ENCODE measurements at regions of chr14 and their contacts with region 1.

Region 1: DNA sequence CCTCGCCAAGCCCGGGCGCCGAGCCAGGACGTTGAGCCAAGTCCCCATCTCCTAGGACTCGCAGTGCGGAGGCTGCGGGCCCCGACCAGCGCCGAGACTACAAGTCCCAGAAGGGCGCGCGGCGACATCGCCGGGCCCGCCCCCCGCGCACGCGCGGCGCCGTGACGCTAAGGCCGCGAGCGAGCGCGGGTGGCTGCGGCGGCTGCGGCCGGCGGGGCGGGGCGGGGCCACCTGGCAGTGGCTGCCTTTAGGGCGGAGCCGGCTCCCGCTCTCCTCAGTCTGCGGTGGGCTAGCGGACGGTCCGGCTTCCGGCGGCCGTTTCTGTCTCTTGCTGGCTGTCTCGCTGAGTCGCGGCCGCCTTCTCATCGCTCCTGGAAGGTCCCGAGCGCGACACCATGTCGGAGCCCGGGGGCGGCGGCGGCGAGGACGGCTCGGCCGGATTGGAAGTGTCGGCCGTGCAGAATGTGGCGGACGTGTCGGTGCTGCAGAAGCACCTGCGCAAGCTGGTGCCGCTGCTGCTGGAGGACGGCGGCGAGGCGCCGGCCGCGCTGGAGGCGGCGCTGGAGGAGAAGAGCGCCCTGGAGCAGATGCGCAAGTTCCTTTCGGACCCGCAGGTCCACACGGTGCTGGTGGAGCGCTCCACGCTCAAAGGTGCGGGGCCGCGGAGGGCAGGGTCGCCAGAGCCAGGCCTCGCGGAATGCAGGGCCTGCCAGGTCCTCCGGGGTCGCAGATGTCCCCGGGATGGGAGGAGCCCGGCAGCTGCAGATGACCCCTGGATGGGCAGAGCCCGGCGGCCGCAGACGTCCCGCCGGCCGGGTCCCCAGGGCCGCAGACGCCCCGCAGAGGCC is at the start of gene DYNC1H1:
- DNase-seq: peak; percentile 92
- ATAC-seq: peak; percentile 87
- H3K4me3 Mint-ChIP-seq: peak within 1 kb of the TSS; percentile 92
- H3K27ac Mint-ChIP-seq: peak within 1 kb of the TSS; percentile 93
- H3K4me1 Mint-ChIP-seq: peaks cover 43% of the 10 kb centered on the region
- H3K27me3 Mint-ChIP-seq: no peaks in the 10 kb centered on the region
- CTCF ChIP-seq: no peak
- total RNA-seq, gene DYNC1H1: 208 and 236 TPM in 2 replicates

Region 2: DNA sequence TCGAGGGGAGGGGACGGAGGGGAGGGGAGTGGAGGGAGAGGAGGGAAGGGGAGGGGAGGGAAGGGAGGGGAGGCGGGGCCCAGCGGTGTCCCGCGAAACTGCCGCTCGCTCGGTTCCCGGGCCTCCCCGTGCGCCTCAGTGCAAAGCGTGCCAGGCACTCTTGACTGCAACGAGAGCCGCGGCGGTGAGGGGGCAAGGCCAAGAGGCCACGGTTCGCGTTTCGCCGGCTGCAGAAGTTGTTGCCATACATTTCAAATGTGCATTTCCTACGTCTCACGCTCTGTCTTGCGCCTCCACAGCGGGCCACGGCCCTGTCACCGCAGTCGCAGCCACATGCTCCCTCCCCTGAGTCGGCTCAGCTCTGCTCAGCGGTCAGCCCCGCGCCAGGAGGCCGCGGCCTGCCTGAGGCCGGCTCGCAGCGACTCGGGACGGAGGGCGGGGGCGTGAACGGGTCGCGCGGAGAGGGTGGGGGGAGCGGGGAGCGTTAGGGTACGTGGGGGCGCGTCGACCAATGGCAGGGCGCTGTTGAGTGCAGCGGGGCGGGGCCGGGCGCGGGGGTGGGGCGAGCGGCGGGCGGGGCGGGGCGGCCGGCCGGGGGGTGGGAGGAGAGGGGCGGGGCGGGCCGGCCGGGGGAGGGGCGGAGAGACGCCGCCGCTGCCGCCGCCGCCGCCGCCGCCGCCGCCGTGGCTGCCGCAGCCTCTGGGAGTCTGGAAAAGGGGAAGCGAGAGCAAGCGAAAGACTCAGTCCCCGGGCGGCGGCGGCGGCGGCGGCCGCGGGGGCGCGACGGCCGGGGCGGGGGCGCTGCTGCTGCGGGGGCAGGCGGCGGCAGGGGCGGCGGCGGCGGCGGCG is 203.3 kb before region 1 on chr14 and contains the start of gene PPP2R5C:
- CTCF ChIA-PET with region 1: no interaction called
- POLR2A ChIA-PET with region 1: interaction called, 3 read pairs
- intact Hi-C with region 1: loop called (anchors 1 kb)
- DNase-seq: peak; percentile 81
- ATAC-seq: peak; percentile 63
- H3K4me3 Mint-ChIP-seq: peak within 1 kb of the TSS; percentile 88
- H3K27ac Mint-ChIP-seq: peak within 1 kb of the TSS; percentile 77
- H3K4me1 Mint-ChIP-seq: peaks cover 18% of the 10 kb centered on the region
- H3K27me3 Mint-ChIP-seq: no peaks in the 10 kb centered on the region
- CTCF ChIP-seq: no peak
- total RNA-seq, gene PPP2R5C: 197 and 227 TPM in 2 replicates

Region 3: GRCh38 chr14:101947906-101948665 is 16.4 kb before region 1 on chr14:
- CTCF ChIA-PET with region 1: interaction called, 5 read pairs
- POLR2A ChIA-PET with region 1: interaction called, 15 read pairs
- intact Hi-C with region 1: loop called (anchors 1 kb)
- DNase-seq: peak; percentile 98
- ATAC-seq: peak; percentile 95
- H3K4me3 Mint-ChIP-seq: peak overlapping the region; percentile 93
- H3K27ac Mint-ChIP-seq: peak overlapping the region; percentile 97
- H3K4me1 Mint-ChIP-seq: peaks cover 19% of the 10 kb centered on the region
- H3K27me3 Mint-ChIP-seq: peaks cover 22% of the 10 kb centered on the region
- CTCF ChIP-seq: no peak

Region 4: DNA sequence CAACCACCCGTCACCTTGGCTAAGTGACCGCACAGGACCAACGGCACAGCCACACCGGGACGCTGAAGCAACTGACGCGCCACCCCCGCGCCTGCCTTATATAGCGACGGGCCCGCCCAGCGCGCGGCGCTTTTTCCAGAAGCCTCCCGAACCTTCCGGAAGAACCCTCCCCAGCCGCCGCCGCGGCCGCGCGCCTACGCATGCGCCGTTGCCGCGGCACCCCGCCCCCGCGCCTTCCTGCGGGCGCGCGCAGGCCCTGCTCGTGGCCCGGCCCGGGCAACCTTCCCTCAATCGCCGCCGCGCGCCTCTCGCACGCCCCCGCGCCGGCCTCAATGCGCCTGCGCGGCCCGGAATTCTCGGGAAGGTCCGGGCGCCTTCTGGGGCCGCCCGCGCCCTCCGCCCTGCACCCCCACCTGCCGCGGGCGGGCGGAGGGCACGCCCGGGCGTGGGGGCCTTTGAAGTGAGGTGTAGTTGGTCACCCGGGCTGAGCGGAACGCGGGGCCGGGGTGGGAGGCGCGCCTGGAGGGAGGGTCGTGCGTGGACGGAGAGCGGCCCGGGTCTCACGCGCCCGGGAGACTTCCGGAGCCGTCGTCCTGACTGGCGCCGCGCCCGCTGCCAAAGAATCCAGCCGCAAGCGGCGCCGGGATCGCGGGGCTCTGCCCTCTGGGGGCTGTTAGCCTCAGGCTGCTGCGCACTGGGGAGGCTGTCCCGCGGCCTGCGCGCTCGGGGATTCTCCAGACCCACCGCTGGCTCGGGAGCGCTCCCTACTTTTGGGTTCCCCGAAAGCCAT is 122.6 kb after region 1 on chr14 and contains the start of gene HSP90AA1:
- CTCF ChIA-PET with region 1: no interaction called
- POLR2A ChIA-PET with region 1: interaction called, 8 read pairs
- intact Hi-C with region 1: loop called (anchors 1 kb)
- DNase-seq: peak; percentile 95
- ATAC-seq: peak; percentile 69
- H3K4me3 Mint-ChIP-seq: peak within 1 kb of the TSS; percentile 93
- H3K27ac Mint-ChIP-seq: peak within 1 kb of the TSS; percentile 88
- H3K4me1 Mint-ChIP-seq: peaks cover 60% of the 10 kb centered on the region
- H3K27me3 Mint-ChIP-seq: no peaks in the 10 kb centered on the region
- CTCF ChIP-seq: no peak
- total RNA-seq, gene HSP90AA1: 431 and 435 TPM in 2 replicates

Region 5: DNA sequence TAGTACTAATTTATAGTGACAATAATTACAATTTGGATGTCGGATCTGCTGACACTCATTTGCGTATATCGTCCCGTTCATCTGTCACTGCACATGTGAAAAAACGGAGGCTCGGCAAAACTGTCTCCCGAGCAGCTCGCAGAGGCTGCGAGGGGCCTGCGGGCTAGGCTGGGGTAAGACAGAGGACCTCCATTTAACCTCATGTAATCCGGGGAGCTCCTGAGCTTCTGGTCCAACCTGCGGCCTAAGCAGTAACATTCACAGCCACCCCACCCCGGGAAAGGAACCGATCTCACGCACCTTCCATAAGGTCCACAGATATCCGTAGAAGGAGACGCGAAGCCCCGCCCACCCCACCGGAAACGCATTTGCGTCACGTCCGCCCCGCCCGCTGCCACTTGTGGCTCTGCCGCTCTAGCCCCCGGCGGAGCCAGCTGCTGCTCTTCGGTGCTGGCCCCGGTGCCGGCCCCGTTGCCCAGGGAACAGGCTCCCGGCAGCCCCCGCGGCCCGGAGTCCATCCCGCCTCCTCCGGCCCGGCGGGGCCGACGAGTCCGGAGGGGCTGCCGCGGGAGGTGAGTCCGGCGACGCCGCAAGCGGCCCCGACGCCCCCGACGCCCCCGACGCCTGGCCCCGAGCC is 398.1 kb after region 1 on chr14 and contains the starts of genes CINP and TECPR2:
- CTCF ChIA-PET with region 1: no interaction called
- POLR2A ChIA-PET with region 1: no interaction called
- intact Hi-C with region 1: loop called (anchors 1 kb)
- DNase-seq: peak; percentile 92
- ATAC-seq: peak; percentile 82
- H3K4me3 Mint-ChIP-seq: no peak within 1 kb of the TSS
- H3K27ac Mint-ChIP-seq: peak within 1 kb of the TSS; percentile 97
- H3K4me1 Mint-ChIP-seq: peaks cover 35% of the 10 kb centered on the region
- H3K27me3 Mint-ChIP-seq: no peaks in the 10 kb centered on the region
- CTCF ChIP-seq: no peak
- total RNA-seq, gene CINP: 48.6 and 57.5 TPM in 2 replicates
- total RNA-seq, gene TECPR2: 9.9 and 11.8 TPM in 2 replicates

Region 6: DNA sequence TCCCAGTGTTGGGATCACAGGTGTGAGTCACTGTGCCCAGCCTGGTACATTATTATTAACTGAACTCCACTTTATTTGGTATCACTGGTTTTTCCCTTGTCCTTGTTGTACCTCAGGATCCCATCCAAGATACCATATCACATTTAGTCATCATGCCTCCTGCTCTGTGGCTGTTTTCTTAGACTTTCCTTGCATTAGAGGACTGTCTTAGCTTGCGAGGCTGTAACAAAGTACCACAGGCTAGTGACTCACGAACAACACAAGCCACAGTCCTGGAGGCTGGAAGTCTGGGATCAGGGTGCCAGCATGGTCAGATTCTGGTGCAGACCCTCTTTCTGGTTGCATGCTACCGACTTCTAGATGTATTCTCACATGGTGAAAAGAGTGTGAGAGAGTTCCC is 1676.7 kb after region 1 on chr14:
- CTCF ChIA-PET with region 1: no interaction called
- POLR2A ChIA-PET with region 1: no interaction called
- intact Hi-C with region 1: no loop called
- DNase-seq: no peak
- ATAC-seq: no peak
- H3K4me3 Mint-ChIP-seq: no peak overlapping the region
- H3K27ac Mint-ChIP-seq: no peak overlapping the region
- H3K4me1 Mint-ChIP-seq: peaks cover 67% of the 10 kb centered on the region
- H3K27me3 Mint-ChIP-seq: no peaks in the 10 kb centered on the region
- CTCF ChIP-seq: no peak